ENCODE measurements at regions of chr5 and their contacts with region 1.

Region 1: DNA sequence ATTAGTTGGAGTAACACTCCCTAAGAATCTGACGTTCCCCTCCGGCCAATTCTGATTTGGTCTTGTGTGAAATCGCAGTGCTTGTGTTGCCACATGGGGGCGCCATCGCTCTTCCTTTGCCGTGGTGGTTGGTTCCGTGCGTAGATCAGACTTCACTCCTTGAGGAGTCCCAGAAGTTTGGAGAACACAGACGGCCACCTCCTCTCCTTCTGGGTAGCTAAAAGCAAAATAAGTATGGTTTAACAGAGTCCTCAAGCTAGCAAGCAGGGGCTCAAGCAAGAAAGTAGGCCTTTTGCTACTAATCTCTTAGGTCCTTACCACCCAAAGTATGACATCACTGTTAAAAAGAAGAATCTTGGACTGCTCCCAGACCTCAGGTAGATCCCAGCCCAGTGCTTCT is 59.5 kb downstream of the HSPA4 start:
- DNase-seq: peak; percentile 79 to 85
- ATAC-seq: peak; percentile 48 to 84 (median 79)
- H3K4me3 ChIP-seq: no peak overlapping the region
- H3K27ac ChIP-seq: no peak overlapping the region
- H3K4me1 ChIP-seq: peaks cover 0 to 9% (median 0%) of the 10 kb centered on the region in 9 donors
- H3K27me3 ChIP-seq: peaks cover 0 to 11% (median 0%) of the 10 kb centered on the region in 7 donors
- CTCF ChIP-seq: peak; percentile 73 to 97 (median 90)

Region 2: DNA sequence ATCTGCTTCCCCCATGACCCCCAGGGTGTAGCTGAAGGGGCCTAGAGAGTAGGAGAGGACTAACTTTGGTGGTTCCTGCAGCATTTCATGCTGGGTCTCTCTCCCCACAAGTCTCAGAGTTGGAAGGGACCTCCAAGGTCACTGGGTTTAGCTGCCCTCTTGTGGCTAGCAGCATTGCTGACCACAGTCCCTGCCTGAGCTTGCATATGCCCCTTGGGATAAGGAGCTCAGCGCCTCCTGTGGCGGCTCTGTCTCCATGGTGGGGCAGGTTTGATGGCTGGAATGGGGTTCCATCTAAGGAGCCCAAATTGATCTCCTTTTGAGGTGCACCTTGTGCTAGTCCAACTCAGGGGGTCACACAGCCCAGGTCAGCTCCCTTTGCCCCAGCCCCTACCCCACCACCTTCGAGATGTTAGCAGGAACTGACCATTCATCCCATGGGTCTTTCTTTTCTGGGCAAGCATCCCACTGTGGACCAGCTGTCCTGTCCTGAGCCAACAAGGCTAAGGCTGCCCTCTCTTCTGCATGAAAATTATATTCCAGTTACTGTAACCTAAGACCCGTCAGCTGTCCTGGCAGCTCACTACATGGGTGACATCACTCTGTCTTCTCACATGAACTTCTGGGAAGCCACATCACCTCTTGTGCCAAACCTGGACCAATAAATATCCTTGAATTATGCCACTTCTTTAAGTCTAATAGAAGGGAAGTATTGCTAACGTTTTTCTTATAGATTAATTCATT is 136.8 kb after region 1 on chr5:
- intact Hi-C with region 1: loop called in 8 of 10 experiments (anchors 2 to 10 kb)
- DNase-seq: peak in 1 of 2 donors; percentile 38
- ATAC-seq: peak; percentile 56 to 80 (median 62)
- H3K4me3 ChIP-seq: no peak overlapping the region
- H3K27ac ChIP-seq: no peak overlapping the region
- H3K4me1 ChIP-seq: peaks cover 0 to 7% (median 0%) of the 10 kb centered on the region in 9 donors
- H3K27me3 ChIP-seq: no peaks in the 10 kb centered on the region
- CTCF ChIP-seq: peak in 8 of 9 donors; percentile 10 to 65 (median 56)

Region 3: GRCh38 chr5:133602835-133603380 is 491.6 kb after region 1 on chr5:
- intact Hi-C with region 1: loop called in 1 of 10 experiments (anchors 10 kb)
- DNase-seq: no peak
- ATAC-seq: peak in 1 of 8 donors; percentile 36
- H3K4me3 ChIP-seq: no peak overlapping the region
- H3K27ac ChIP-seq: no peak overlapping the region
- H3K4me1 ChIP-seq: peaks cover 0 to 17% (median 0%) of the 10 kb centered on the region in 9 donors
- H3K27me3 ChIP-seq: peaks cover 0 to 7% (median 3%) of the 10 kb centered on the region in 7 donors
- CTCF ChIP-seq: no peak

Region 4: DNA sequence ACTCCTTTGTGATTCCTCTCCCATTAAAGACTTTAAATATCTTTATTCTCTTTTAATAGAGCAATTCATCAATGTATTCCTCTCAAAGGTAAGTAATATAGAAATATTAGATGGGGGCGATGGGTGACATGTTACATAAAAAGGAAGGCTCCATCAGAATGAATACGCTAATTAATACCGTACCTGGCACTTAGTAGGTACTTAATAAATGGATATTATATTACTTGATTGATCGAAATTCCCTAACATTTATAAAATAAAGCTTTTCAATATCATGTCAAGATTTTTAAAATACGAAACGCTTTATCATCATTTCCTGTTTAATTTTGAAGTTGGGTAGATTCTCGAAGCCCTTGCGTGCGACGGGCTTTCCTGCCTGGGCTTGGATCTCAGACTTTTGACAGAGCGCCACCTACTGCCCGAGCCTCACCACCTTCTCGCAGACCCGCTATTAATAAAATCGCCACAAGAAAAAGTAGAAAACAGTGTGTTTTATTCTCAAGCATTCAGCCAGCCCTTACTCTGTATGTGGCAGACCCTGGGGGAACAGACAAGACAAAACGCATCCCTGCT is 757.7 kb after region 1 on chr5:
- intact Hi-C with region 1: loop called in 3 of 10 experiments (anchors 2 to 10 kb)
- DNase-seq: peak; percentile 74
- ATAC-seq: peak; percentile 72 to 90 (median 81)
- H3K4me3 ChIP-seq: peak overlapping the region in 8 of 10 donors; percentile 28 to 47 (median 45)
- H3K27ac ChIP-seq: peak overlapping the region in 6 of 10 donors; percentile 15 to 52 (median 40)
- H3K4me1 ChIP-seq: peaks cover 0 to 10% (median 7%) of the 10 kb centered on the region in 9 donors
- H3K27me3 ChIP-seq: peaks cover 0 to 4% (median 0%) of the 10 kb centered on the region in 7 donors
- CTCF ChIP-seq: peak; percentile 47 to 89 (median 77)

Measured in heart right ventricle (tissue), 16 donors.